ENCODE measurements at regions of chr22 and their contacts with region 1.

Region 1: DNA sequence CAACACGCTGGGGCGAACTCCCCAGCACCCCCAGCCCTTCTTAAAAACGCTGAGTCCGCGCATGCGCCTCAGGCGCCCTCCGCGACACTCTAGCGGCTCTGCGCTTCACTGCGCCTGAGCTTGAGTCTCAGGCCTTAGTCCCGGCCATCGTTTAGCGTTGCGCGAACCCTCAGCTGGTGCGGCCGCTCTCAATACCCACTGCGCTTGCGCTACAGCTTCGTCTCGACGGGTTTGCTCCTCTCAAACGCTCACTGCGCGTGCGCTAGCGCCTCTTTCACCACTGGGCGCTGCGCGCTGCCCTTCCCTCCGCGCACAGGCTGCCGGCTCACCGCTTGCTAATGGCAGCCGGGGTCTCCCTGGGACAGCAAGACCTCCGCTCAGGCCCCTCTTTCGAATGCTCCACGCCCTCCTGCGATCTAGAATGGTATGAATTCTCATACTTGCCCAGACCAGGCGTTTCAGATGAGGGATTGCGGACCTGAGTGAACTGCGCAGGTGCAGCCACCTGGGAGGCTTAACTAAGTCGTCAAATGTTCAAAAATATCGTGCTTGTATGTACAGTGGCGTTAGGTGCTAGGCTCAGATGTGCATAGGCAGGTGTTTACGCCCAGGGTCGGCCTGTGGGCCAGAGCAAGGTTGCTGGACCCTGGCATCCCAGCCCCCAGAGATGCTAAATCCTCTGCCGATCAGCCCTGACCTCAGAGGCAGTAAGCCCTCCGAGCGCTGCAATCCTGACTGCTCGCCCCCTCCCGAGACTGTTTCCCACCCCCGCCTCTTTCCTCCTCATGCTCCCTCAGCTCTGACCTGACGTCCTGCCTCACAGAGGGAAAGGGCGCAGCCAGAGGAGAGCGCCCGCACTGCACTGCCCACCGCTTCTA is at the start of gene SLC2A11:
- DNase-seq: peak; percentile 96
- ATAC-seq: peak; percentile 93
- H3K4me3 ChIP-seq: peak within 1 kb of the TSS; percentile 65 to 89 (median 75)
- H3K27ac ChIP-seq: peak within 1 kb of the TSS; percentile 81
- H3K4me1 ChIP-seq: peaks cover 25% of the 10 kb centered on the region
- H3K27me3 ChIP-seq: no peaks in the 10 kb centered on the region; a peak in 1 of 5 replicates
- CTCF ChIP-seq: peak; percentile 19
- EP300 ChIP-seq: no peak
- POLR2A ChIP-seq: peak; percentile 47 to 93; a peak in 3 of 4 replicates
- RAD21 ChIP-seq: no peak
- total RNA-seq, gene SLC2A11: 8.9 and 15.2 TPM in 2 replicates

Region 2: GRCh38 chr22:23786752-23787599 is 70.9 kb before region 1 on chr22 and contains the start of gene SMARCB1:
- CTCF ChIA-PET with region 1: no interaction called
- POLR2A ChIA-PET with region 1: interaction called, 11 read pairs
- in situ Hi-C with region 1: no loop called
- intact Hi-C with region 1: loop called (anchors 5 kb)
- DNase-seq: peak; percentile 70
- ATAC-seq: peak; percentile 43
- H3K4me3 ChIP-seq: peak within 1 kb of the TSS; percentile 84 to 92 (median 90)
- H3K27ac ChIP-seq: peak within 1 kb of the TSS; percentile 99
- H3K4me1 ChIP-seq: peaks cover 71% of the 10 kb centered on the region
- H3K27me3 ChIP-seq: no peaks in the 10 kb centered on the region
- CTCF ChIP-seq: no peak; the same call in 1 of the 2 replicates
- EP300 ChIP-seq: no peak
- POLR2A ChIP-seq: peak; percentile 66 to 82
- RAD21 ChIP-seq: peak; percentile 55; the same call in 1 of the 2 replicates
- total RNA-seq, gene SMARCB1: 74.0 and 75.8 TPM in 2 replicates

Region 3: GRCh38 chr22:23893943-23894709 is 36.3 kb after region 1 on chr22 and contains the start of gene MIF:
- CTCF ChIA-PET with region 1: interaction called, 7 read pairs
- POLR2A ChIA-PET with region 1: interaction called, 57 read pairs
- in situ Hi-C with region 1: no loop called
- intact Hi-C with region 1: no loop called
- DNase-seq: peak; percentile 89
- ATAC-seq: peak; percentile 82
- H3K4me3 ChIP-seq: peak within 1 kb of the TSS; percentile 78 to 86 (median 85)
- H3K27ac ChIP-seq: peak within 1 kb of the TSS; percentile 96
- H3K4me1 ChIP-seq: peaks cover 54% of the 10 kb centered on the region
- H3K27me3 ChIP-seq: no peaks in the 10 kb centered on the region; a peak in 1 of 5 replicates
- CTCF ChIP-seq: peak; percentile 92
- EP300 ChIP-seq: peak in 1 of 2 experiments; percentile 35; a peak in 1 of 4 replicates
- POLR2A ChIP-seq: peak; percentile 89 to 98
- RAD21 ChIP-seq: peak; percentile 48
- total RNA-seq, gene MIF: 537 and 634 TPM in 2 replicates

Region 4: DNA sequence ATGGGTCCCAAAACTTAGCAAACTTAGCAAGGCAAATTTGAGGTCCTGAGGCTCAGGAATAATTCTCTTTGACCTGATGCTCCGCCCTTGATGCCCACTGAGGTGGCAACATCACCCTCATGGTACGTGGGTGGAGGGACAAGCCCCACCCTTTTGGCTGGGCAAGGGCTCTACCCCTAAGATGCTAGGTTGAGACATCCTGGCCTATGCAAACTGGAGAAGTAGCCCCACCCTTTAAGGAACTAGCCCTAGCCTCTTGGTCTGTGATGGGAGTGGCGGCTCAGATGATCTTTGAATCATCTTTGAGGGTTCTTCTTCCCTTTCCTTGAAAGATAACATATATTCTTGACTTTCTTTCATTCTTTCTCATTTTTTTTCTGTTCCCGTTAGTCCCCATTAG is 186.1 kb after region 1 on chr22:
- CTCF ChIA-PET with region 1: no interaction called
- POLR2A ChIA-PET with region 1: no interaction called
- in situ Hi-C with region 1: no loop called
- intact Hi-C with region 1: no loop called
- DNase-seq: no peak
- ATAC-seq: no peak
- H3K4me3 ChIP-seq: no peak overlapping the region
- H3K27ac ChIP-seq: no peak overlapping the region
- H3K4me1 ChIP-seq: peaks cover 21% of the 10 kb centered on the region
- H3K27me3 ChIP-seq: no peaks in the 10 kb centered on the region
- CTCF ChIP-seq: no peak
- EP300 ChIP-seq: no peak
- POLR2A ChIP-seq: no peak
- RAD21 ChIP-seq: no peak